AG04450 (cell line): ENCODE measurements at regions of chr11 and their contacts with region 1.

Region 1: GRCh38 chr11:18105802-18106574 is at the start of gene SAAL1:
- DNase-seq: no peak
- H3K4me3 ChIP-seq: peak within 1 kb of the TSS; percentile 90
- H3K27ac ChIP-seq: no peak within 1 kb of the TSS
- H3K27me3 ChIP-seq: peaks cover 2% of the 10 kb centered on the region
- CTCF ChIP-seq: peak; percentile 59
- polyA plus RNA-seq, gene SAAL1: 15.4 and 17.0 TPM in 2 replicates

Region 2: DNA sequence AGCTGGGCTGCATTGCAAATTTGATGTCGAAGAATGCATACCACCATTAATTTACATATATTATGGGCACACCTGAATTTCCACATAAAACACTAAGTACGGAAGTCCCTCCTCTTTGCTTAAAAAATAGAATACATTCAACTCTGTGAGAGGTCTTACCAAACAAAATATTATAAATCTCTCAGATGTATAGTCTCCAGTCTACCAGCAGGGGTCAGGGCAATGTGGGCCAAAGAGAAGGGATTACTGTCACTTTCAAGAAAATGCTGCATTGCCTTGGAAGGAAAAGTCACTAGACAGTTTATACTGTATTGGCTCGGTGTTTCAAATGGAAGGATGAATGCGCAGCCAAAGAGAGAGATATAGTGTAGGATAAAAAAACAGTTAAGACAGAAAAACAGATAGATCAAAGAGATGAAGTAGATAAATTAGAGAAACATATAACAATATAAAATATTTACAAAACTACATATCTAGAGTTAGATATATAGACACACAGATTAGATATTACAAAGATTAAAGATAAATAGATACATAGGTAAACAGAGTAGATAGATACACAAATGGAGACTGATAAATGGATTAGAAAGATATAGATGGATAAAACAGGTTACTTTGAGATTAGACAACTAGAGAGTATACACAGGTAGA is 114.1 kb before region 1 on chr11:
- CTCF ChIA-PET with region 1: interaction called, 14 read pairs
- POLR2A ChIA-PET with region 1: no interaction called
- DNase-seq: peak; percentile 36
- H3K4me3 ChIP-seq: no peak overlapping the region
- H3K27ac ChIP-seq: no peak overlapping the region
- H3K27me3 ChIP-seq: no peaks in the 10 kb centered on the region
- CTCF ChIP-seq: peak; percentile 92

Region 3: DNA sequence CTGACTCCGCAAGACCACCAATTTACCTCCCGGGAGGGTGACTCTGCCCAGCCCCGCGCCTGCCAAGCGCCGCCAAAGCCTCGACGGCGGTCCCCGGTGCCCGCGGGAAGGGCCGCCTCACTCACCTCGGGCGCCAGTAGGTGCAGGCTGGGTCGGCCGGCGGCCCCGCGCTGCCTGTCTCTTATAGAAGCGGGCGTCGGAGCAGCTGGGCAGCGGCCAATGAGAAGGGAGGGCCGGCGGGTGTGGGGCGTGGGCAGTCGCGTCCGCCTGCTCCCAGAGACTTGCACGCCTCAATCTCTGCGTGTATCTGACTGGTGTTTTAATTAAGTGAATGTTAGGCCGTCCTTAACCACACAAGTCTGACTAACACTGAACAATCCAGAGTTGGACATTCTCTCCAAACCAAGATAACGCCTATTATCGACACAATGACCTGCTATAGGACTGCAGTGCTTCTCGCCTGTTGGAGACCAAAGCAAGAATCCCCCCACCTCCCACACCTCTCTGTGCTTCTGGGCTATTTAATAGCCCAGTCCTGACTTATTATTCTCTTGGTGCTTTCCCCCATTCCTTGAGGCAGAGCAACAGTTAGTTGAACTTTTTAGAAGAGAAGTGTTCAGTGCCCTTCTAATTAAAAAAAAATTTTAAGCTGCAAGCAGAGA is 59.7 kb before region 1 on chr11 and contains the start of gene TPH1:
- CTCF ChIA-PET with region 1: no interaction called
- POLR2A ChIA-PET with region 1: no interaction called
- DNase-seq: no peak
- H3K4me3 ChIP-seq: no peak within 1 kb of the TSS
- H3K27ac ChIP-seq: no peak within 1 kb of the TSS
- H3K27me3 ChIP-seq: peaks cover 21% of the 10 kb centered on the region
- CTCF ChIP-seq: no peak
- polyA plus RNA-seq, gene TPH1: 0.04 and 0.06 TPM in 2 replicates

Region 4: GRCh38 chr11:18056561-18057181 is 49.3 kb before region 1 on chr11:
- CTCF ChIA-PET with region 1: no interaction called
- POLR2A ChIA-PET with region 1: no interaction called
- DNase-seq: no peak
- H3K4me3 ChIP-seq: no peak overlapping the region
- H3K27ac ChIP-seq: no peak overlapping the region
- H3K27me3 ChIP-seq: no peaks in the 10 kb centered on the region
- CTCF ChIP-seq: no peak

Region 5: GRCh38 chr11:18071098-18071705 is 34.8 kb before region 1 on chr11:
- CTCF ChIA-PET with region 1: interaction called, 10 read pairs
- POLR2A ChIA-PET with region 1: no interaction called
- DNase-seq: peak; percentile 52
- H3K4me3 ChIP-seq: no peak overlapping the region
- H3K27ac ChIP-seq: peak overlapping the region; percentile 63
- H3K27me3 ChIP-seq: no peaks in the 10 kb centered on the region
- CTCF ChIP-seq: no peak

Region 6: DNA sequence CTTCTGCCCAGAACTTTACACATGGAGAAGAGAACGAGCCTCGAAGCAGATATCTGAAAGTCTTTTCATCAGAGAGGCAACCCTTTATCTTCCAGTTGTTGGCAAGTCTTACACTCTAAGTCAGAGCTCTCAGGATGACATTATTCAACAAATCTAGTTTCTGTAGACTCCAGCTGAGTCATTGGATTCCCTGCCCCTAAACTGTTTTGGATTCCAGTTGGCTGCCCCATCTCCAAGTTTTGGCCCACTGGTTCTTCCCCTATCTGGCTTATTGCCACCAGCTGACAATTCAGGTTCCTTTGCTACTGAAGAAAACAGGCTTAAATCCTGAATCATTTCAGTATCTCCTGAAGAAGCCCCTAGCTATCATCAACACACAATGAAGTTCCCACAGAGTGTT is 14.3 kb before region 1 on chr11:
- CTCF ChIA-PET with region 1: interaction called, 14 read pairs
- POLR2A ChIA-PET with region 1: no interaction called
- DNase-seq: no peak
- H3K4me3 ChIP-seq: no peak overlapping the region
- H3K27ac ChIP-seq: no peak overlapping the region
- H3K27me3 ChIP-seq: no peaks in the 10 kb centered on the region
- CTCF ChIP-seq: no peak

Region 7: DNA sequence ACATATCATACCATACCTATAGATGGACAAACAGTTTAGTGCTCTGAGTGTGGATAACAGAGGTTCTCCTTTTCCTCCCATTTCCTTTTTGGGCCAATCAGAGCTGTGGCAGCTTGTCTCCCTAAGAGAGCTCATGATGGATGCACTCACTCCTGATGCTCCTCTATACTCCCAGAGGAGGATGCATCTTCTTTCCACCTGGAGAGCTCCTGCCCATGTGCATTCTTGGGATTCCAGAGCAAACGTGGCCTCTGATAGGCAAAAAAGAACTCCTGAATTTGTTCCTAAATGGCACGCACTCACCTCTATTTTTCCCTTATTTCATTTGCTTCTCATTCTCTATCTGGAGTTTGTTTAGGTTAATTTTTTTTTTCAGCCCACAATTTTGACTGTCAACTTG is 29.3 kb after region 1 on chr11:
- CTCF ChIA-PET with region 1: no interaction called
- POLR2A ChIA-PET with region 1: no interaction called
- DNase-seq: no peak
- H3K4me3 ChIP-seq: no peak overlapping the region
- H3K27ac ChIP-seq: no peak overlapping the region
- H3K27me3 ChIP-seq: no peaks in the 10 kb centered on the region
- CTCF ChIP-seq: no peak

Region 8: DNA sequence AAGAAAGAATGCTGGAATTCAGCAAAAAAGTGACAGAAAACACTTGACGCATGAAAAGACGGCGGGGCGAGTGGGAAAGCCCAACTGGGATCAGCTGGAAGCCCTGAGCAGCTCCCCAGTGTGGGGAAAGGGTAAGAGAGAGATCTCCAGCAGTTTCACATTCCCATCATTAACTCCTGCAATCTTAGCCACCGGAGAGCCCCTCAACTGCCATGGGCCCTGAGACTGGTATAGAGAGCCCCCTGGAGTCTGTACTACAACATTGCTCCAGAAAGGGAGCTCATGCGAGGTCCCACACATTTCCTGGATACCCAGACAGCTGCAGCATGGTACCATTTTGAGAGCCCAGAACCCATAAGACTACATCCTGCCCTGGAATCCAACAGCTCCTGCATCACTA is 97.7 kb after region 1 on chr11:
- CTCF ChIA-PET with region 1: interaction called, 17 read pairs
- POLR2A ChIA-PET with region 1: no interaction called
- DNase-seq: no peak
- H3K4me3 ChIP-seq: no peak overlapping the region
- H3K27ac ChIP-seq: no peak overlapping the region
- H3K27me3 ChIP-seq: peaks cover 1% of the 10 kb centered on the region
- CTCF ChIP-seq: peak; percentile 58

Region 9: GRCh38 chr11:18765554-18765953 is 659.6 kb after region 1 on chr11:
- CTCF ChIA-PET with region 1: no interaction called
- POLR2A ChIA-PET with region 1: no interaction called
- DNase-seq: no peak
- H3K4me3 ChIP-seq: no peak overlapping the region
- H3K27ac ChIP-seq: no peak overlapping the region
- H3K27me3 ChIP-seq: no peaks in the 10 kb centered on the region
- CTCF ChIP-seq: no peak